ENCODE measurements at regions of chr17 and their contacts with region 1.

Region 1: GRCh38 chr17:49361902-49362722 is at the start of gene ZNF652:
- DNase-seq: peak; percentile 97
- ATAC-seq: peak; percentile 72
- H3K4me3 Mint-ChIP-seq: peak within 1 kb of the TSS; percentile 90
- H3K27ac Mint-ChIP-seq: peak within 1 kb of the TSS; percentile 95
- H3K4me1 Mint-ChIP-seq: peaks cover 54% of the 10 kb centered on the region
- H3K27me3 Mint-ChIP-seq: no peaks in the 10 kb centered on the region
- total RNA-seq, gene ZNF652: 27.3 to 27.9 TPM

Region 2: DNA sequence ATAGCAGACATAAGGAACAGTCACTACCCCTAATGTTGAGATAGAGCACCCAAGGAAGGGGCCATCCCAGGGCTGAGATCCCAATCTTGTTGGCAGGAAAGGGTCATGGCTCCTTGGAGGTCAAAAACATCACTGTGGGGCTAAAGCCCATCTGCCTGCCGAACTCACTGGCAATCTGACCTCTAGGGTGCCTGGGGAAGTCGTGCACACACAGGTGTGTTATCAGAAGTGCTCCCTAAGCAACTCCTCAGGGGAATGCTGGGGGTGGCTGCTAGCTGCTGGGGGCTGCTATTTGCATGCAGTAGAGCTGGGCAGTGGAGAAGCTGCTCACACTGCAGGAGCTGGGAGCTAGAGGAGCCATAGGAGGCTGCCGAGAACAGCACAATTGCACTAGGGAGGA is 84.0 kb before region 1 on chr17:
- CTCF ChIA-PET with region 1: no interaction called
- POLR2A ChIA-PET with region 1: no interaction called
- DNase-seq: no peak
- ATAC-seq: no peak
- H3K4me3 Mint-ChIP-seq: no peak overlapping the region
- H3K27ac Mint-ChIP-seq: no peak overlapping the region
- H3K4me1 Mint-ChIP-seq: no peaks in the 10 kb centered on the region
- H3K27me3 Mint-ChIP-seq: peaks cover 5% of the 10 kb centered on the region

Region 3: DNA sequence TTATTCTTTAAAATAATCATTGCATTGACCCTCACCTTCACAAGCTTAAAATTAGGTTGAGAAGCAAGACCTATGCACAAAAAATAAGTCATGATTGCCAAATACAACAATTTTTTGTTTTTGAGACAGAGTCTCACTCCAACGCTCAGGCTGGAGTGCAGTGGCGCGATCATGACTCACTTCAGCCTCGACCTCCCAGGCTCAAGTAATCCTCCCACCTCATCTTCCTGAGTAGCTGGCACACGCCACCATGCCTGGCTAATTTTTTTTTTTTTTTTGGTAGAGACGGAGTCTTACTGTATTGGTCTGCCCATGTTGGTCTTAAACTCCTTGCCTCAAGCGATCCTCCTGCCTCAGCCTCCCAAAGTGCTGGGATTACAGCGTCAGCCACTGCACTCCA is 24.2 kb before region 1 on chr17:
- CTCF ChIA-PET with region 1: interaction called, 38 read pairs
- POLR2A ChIA-PET with region 1: interaction called, 40 read pairs
- DNase-seq: no peak
- ATAC-seq: no peak
- H3K4me3 Mint-ChIP-seq: no peak overlapping the region
- H3K27ac Mint-ChIP-seq: no peak overlapping the region
- H3K4me1 Mint-ChIP-seq: peaks cover 52% of the 10 kb centered on the region
- H3K27me3 Mint-ChIP-seq: no peaks in the 10 kb centered on the region

Region 4: GRCh38 chr17:49343273-49343672 is 18.8 kb before region 1 on chr17:
- CTCF ChIA-PET with region 1: interaction called, 38 read pairs
- POLR2A ChIA-PET with region 1: interaction called, 40 read pairs
- DNase-seq: no peak
- ATAC-seq: peak; percentile 50
- H3K4me3 Mint-ChIP-seq: peak overlapping the region; percentile 72
- H3K27ac Mint-ChIP-seq: peak overlapping the region; percentile 71
- H3K4me1 Mint-ChIP-seq: peaks cover 71% of the 10 kb centered on the region
- H3K27me3 Mint-ChIP-seq: no peaks in the 10 kb centered on the region

Region 5: GRCh38 chr17:49349535-49349934 is 12.6 kb before region 1 on chr17:
- CTCF ChIA-PET with region 1: interaction called, 38 read pairs
- POLR2A ChIA-PET with region 1: interaction called, 18 read pairs
- DNase-seq: no peak
- ATAC-seq: no peak
- H3K4me3 Mint-ChIP-seq: no peak overlapping the region
- H3K27ac Mint-ChIP-seq: no peak overlapping the region
- H3K4me1 Mint-ChIP-seq: peaks cover 44% of the 10 kb centered on the region
- H3K27me3 Mint-ChIP-seq: no peaks in the 10 kb centered on the region

Region 6: DNA sequence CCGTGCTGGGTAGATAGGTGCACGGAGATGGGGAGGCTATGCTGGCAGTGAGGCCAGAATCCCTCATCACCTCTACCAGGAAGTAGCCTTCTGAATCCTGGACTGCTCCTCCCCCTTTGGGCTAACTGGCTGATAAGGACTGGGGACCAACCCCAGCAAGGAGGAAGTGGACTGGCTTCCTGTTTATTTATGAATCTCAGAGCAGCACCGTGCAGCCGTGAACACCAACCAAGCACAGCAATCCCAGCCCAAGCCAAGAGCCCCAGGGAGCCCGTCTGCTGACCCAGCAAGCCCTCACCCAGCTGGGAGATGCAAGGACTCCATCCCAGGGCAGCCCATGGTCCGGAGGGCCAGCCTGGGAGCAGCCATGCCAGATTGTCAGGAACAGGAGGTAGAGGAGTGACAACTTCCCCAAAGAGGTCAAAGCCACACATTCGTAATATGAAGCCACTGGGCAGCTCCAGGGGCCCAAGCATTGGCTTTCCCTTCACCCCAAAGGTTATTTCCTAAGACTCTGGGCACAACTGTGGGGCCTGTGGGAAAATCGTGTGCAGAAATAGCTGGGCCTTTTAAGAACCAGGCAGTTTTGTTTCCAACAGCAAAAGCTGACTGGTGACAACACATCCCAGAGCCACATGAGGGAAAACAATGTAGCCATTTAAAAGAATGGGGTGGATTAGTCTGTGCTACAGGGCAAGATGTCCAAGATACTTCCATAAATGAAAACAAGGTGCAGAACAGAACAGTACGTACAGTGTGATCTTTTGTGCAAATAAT is 28.6 kb after region 1 on chr17:
- CTCF ChIA-PET with region 1: interaction called, 60 read pairs
- POLR2A ChIA-PET with region 1: interaction called, 9 read pairs
- DNase-seq: no peak
- ATAC-seq: no peak
- H3K4me3 Mint-ChIP-seq: peak overlapping the region; percentile 37
- H3K27ac Mint-ChIP-seq: peak overlapping the region; percentile 94
- H3K4me1 Mint-ChIP-seq: peaks cover 71% of the 10 kb centered on the region
- H3K27me3 Mint-ChIP-seq: no peaks in the 10 kb centered on the region

Measured in activated CD8-positive, alpha-beta T cell treated with anti-CD3 and anti-CD28 coated beads, Interleukin-2, amount 10 ng/mL, durations not matched to agents 7 days and 5 days (primary cell).